Aorta (tissue), 5 donors: ENCODE measurements at regions of chr1 and their contacts with region 1.

Region 1: DNA sequence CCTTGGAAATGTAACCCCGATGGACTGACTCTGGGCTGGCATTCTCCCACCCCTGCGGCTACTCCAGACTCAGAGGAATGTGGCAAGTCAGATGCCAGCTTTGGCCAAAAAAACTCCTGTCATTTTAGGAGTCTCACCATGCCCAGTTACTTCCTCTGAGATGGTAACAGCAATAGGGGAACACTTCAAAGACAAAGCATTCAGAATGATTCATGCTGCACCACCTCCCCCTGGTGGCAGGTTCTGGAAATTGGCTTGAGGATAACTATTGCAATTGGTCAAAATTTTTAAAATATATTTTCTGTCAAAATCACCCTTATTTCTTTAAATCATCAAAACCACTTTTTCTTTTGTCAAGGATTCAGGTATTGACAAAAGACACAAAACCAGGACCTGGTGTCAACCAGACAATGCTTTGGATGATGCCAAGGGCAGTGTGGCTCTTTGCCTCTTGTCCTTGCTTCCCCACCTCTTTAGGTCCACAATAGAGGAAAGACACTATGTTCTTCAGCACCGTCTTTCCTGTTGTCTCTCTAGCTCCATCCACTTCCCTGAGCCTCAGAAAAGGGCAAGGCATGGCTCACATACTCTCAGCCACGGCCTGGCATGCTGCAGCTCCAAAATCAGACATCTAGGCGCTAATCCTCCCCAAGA is 9.9 kb upstream of the CDCA8 start:
- DNase-seq: peak; percentile 78 to 83
- ATAC-seq: peak; percentile 56
- H3K4me3 ChIP-seq: no peak overlapping the region
- H3K27ac ChIP-seq: peak overlapping the region in 1 of 2 donors; percentile 11
- H3K4me1 ChIP-seq: no peaks in the 10 kb centered on the region
- H3K27me3 ChIP-seq: no peaks in the 10 kb centered on the region

Region 2: DNA sequence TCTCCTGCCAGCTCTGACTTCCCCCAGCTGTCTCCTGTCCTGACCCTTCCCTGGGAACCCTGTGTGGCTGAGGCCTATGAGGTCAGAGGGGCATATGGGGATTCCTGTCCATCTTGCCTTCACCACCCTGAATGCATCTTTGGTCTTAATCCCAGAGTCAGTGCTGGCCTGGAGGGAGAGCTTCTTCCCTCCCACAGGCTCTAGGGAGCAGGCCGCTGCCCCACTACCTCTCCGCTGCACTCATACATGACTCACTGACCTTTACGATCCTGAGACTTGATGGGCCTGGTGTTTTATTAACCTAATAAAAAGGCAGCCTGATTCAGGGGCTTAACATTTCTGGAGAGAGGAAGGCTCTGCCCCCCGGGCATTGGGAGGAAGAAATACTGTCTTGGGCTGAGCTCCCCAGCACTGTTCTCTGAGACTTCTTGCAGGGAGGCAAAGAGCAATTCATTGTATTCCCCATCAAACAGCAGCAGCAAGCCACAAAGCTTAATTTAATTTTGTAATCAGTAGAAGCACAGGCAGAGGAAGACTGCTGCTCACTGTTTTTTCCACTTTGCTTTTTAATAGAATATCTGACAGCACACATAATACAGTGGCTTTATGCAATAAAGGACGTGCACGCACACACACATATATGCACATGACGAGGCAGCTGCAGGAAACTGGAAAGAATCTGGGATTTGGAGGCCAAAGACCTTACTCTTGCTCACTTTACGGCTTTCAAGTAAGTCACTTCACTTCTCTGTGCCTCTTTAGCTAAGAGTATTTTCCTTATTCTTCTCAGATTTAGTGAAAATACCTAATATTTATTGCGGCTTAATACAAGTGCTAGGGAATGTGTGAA is 559.0 kb before region 1 on chr1:
- intact Hi-C with region 1: no loop called
- DNase-seq: no peak
- ATAC-seq: no peak
- H3K4me3 ChIP-seq: no peak overlapping the region
- H3K27ac ChIP-seq: no peak overlapping the region
- H3K4me1 ChIP-seq: no peaks in the 10 kb centered on the region
- H3K27me3 ChIP-seq: no peaks in the 10 kb centered on the region

Region 3: DNA sequence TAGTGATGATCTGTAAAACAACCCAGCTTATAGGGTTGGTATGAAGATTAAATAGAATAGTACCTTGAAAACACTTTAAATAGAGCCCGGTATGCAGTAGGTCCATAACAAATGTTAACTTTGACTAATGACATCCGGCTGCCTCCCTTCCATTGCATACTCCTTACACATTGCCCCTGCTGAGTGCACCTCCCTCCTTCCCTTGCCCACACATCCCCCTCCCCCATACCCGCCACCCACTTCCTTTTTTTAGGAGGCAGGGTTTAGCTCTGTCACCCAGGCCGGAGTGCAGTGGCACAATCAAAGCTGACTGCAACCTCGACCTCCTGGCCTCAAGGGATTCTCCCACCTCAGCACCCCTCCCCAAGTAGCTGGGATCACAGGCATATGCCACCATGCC is 232.5 kb before region 1 on chr1:
- intact Hi-C with region 1: loop called (anchors 5 kb)
- DNase-seq: peak in 1 of 2 donors; percentile 66
- ATAC-seq: no peak
- H3K4me3 ChIP-seq: no peak overlapping the region
- H3K27ac ChIP-seq: no peak overlapping the region
- H3K4me1 ChIP-seq: no peaks in the 10 kb centered on the region
- H3K27me3 ChIP-seq: no peaks in the 10 kb centered on the region

Region 4: DNA sequence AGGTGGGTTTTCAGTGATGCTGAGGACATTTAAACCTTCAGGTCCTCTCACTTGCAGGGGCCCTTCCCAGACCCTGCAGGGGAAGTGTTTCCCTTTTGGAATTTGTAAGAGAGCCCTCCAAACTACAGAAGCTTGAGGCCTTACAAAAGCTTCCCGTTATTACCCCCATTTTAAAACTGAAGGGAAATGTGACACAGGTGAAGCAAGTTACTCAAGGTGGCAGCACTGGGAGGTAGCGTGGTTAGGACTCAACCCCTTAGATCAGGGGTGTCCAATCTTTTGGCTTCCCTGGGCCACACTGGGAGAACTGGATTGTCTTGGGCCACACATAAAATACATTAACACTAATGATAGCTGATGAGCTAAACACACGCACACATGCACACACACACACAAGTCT is 223.9 kb before region 1 on chr1:
- intact Hi-C with region 1: loop called (anchors 5 kb)
- DNase-seq: no peak
- ATAC-seq: no peak
- H3K4me3 ChIP-seq: no peak overlapping the region
- H3K27ac ChIP-seq: no peak overlapping the region
- H3K4me1 ChIP-seq: no peaks in the 10 kb centered on the region
- H3K27me3 ChIP-seq: no peaks in the 10 kb centered on the region

Region 5: DNA sequence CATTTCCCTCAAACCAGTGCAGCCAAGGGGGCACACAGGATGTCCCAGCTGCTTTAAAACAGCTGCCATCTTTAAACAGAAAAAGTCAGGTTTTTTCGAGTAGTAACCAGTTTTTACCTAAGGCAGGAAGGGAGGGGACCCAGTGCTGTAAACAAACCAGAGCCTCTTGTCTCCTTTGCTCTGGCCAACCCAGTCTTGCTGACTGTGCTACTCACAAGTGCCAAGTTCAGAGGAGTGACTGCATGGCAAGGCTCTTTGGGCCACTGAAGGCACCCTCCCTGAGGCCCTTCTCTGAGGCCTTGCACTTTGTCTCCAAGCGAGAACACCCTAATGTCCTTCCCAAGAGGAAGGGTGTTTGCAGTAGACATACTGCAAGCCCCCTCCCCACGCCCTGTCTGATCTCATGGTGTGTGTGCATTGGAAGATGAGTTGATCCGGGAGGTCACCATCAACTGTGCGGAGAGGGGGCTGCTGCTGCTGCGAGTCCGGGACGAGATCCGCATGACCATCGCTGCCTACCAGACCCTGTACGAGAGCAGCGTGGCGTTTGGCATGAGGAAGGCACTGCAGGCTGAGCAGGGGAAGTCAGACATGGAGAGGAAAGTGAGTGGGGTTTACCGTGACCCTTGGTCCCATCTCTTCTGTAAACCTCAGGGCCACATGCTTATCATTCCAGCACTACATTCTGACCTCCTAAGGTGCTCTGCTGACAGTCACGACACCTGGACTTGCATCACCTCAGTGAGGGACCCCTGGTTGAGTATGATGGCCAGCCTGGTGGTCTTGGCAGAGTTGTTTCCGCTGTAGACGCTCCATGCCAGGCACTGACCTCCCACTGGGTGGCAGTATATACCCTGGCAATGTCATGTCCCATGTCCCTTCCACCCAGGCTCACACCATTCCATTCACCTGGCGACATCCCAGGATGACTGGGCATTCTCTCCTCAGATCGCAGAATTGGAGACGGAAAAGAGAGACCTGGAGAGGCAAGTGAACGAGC is 121.0 kb before region 1 on chr1:
- intact Hi-C with region 1: loop called in 1 of 2 experiments (anchors 2 kb)
- DNase-seq: peak in 1 of 2 donors; percentile 48
- ATAC-seq: no peak
- H3K4me3 ChIP-seq: no peak overlapping the region
- H3K27ac ChIP-seq: no peak overlapping the region
- H3K4me1 ChIP-seq: no peaks in the 10 kb centered on the region
- H3K27me3 ChIP-seq: no peaks in the 10 kb centered on the region

Region 6: DNA sequence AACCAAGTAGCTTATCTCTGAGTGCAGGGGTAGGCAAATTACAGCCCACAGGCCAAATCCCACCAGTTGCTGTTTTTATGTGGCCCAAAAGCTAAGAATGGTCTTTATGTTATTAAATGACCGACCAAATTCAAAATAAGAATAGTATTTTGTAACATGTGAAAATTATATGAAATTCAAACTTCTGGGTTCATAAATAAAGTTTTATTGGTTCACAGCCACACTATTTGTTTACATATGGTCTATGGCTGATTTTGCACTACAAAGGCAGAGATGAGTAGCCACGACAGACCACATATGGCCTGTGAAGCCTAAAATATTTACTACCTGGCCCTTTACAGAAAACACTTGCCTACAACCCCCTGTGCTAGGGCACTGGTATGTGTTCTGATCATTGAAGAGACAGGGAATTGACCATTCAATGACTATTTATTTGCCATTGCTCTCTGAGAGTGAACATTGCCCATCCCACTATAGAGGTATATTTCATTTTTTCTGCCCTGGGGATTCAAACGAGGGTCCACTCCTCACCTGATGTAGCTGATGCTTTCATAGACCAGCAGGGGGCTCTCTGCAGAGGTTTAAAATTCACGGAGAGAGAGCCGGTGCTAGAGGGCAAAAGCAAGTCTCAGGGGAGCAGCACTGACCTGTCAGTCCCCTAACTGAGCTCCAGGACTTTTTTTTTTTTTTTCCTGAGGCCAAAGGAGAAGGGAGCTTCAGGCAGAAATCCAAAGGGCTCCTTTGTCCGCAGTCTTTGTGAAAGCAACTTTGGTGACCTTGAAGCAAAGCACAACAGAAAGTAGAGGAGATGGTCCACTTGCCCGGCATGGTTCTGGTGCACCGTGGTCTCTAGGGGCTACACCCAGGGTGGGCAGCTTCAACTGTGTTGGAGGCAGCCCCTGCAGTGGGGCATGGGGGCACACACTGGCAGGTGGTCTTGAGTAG is 79.4 kb before region 1 on chr1:
- intact Hi-C with region 1: loop called (anchors 5 kb)
- DNase-seq: no peak
- ATAC-seq: no peak
- H3K4me3 ChIP-seq: no peak overlapping the region
- H3K27ac ChIP-seq: no peak overlapping the region
- H3K4me1 ChIP-seq: no peaks in the 10 kb centered on the region
- H3K27me3 ChIP-seq: no peaks in the 10 kb centered on the region

Region 7: GRCh38 chr1:37767488-37767887 is 85.0 kb after region 1 on chr1:
- intact Hi-C with region 1: no loop called
- DNase-seq: no peak
- ATAC-seq: no peak
- H3K4me3 ChIP-seq: no peak overlapping the region
- H3K27ac ChIP-seq: no peak overlapping the region
- H3K4me1 ChIP-seq: no peaks in the 10 kb centered on the region
- H3K27me3 ChIP-seq: peaks cover 0 to 2% of the 10 kb centered on the region in 2 donors

Region 8: DNA sequence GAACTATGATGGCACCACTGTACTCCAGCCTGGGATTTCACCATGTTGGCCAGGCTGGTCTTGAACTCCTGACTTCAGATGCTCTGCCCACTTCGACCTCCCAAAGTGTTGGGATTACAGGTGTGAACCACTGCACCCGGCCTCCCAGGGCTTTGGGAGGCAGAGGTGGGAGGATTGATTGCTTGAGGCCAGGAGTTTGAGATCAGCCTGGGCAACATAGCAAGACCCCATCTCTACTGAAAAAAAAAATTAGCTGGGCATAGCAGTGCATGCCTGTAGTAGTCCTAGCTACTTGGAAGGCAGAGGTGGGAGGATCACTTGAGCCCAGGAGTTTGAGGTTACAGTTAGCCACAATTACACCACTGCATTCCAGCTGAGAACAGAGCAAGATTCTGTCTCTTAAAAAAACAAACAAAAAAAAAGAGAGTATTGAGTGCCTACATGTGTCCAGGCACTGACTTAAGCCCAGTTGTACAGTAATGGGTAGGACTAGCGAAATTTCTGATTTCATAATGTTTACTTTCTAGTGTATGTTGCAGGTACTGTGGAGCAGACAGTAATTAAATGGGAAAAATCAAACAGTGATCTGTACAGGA is 115.4 kb after region 1 on chr1:
- intact Hi-C with region 1: no loop called
- DNase-seq: peak in 1 of 2 donors; percentile 27
- ATAC-seq: no peak
- H3K4me3 ChIP-seq: no peak overlapping the region
- H3K27ac ChIP-seq: no peak overlapping the region
- H3K4me1 ChIP-seq: no peaks in the 10 kb centered on the region
- H3K27me3 ChIP-seq: no peaks in the 10 kb centered on the region